HepG2 (cell line): ENCODE measurements at regions of chr16 and their contacts with region 1.

Region 1: DNA sequence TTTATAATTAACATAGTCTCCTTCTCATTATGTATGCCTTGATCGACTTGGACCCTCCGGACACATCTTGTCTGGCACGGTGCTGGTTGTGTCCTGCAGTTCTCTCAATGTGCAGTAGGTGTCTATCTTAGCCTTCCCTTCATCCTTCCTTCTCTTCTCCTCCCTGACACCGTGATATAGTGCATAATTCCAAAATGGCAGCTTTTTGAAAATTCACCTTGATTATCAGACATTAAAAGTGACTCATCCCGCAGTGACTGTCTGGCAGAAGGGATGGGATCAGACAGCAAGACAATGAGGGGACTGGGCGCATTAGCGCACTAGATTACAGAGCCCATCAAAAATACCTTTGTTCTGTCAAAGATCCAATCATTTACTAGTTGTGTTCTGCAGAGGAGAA is 70.0 kb upstream of the PMFBP1 start:
- DNase-seq: peak; percentile 52
- ATAC-seq: peak; percentile 97
- H3K4me3 ChIP-seq: no peak overlapping the region
- H3K27ac ChIP-seq: no peak overlapping the region
- H3K4me1 ChIP-seq: no peaks in the 10 kb centered on the region
- H3K27me3 ChIP-seq: no peaks in the 10 kb centered on the region
- CTCF ChIP-seq: peak; percentile 85
- EP300 ChIP-seq: no peak
- POLR2A ChIP-seq: no peak
- RAD21 ChIP-seq: peak; percentile 86

Region 2: GRCh38 chr16:72124761-72125634 is 116.9 kb before region 1 on chr16:
- CTCF ChIA-PET with region 1: no interaction called
- POLR2A ChIA-PET with region 1: no interaction called
- in situ Hi-C with region 1: no loop called
- intact Hi-C with region 1: loop called (anchors 1 kb)
- DNase-seq: peak; percentile 67
- ATAC-seq: peak; percentile 90
- H3K4me3 ChIP-seq: 0 out of 6 replicates have a peak overlapping the region, but pooled peaks of 1 of the 3 experiments have one; percentile 6
- H3K27ac ChIP-seq: peak overlapping the region; percentile 53
- H3K4me1 ChIP-seq: peaks cover 26% of the 10 kb centered on the region
- H3K27me3 ChIP-seq: no peaks in the 10 kb centered on the region
- CTCF ChIP-seq: peak; percentile 95
- EP300 ChIP-seq: peak in 1 of 2 experiments; percentile 17; a peak in 1 of 4 replicates
- POLR2A ChIP-seq: no peak
- RAD21 ChIP-seq: peak; percentile 81

Region 3: GRCh38 chr16:72400257-72400882 is 158.4 kb after region 1 on chr16:
- CTCF ChIA-PET with region 1: no interaction called
- POLR2A ChIA-PET with region 1: no interaction called
- in situ Hi-C with region 1: no loop called
- intact Hi-C with region 1: loop called (anchors 1 kb)
- DNase-seq: peak; percentile 71
- ATAC-seq: peak; percentile 82
- H3K4me3 ChIP-seq: no peak overlapping the region
- H3K27ac ChIP-seq: no peak overlapping the region
- H3K4me1 ChIP-seq: no peaks in the 10 kb centered on the region
- H3K27me3 ChIP-seq: no peaks in the 10 kb centered on the region
- CTCF ChIP-seq: peak; percentile 83
- EP300 ChIP-seq: no peak
- POLR2A ChIP-seq: no peak
- RAD21 ChIP-seq: peak; percentile 73